ENCODE measurements at regions of chr13 and their contacts with region 1.

Region 1: DNA sequence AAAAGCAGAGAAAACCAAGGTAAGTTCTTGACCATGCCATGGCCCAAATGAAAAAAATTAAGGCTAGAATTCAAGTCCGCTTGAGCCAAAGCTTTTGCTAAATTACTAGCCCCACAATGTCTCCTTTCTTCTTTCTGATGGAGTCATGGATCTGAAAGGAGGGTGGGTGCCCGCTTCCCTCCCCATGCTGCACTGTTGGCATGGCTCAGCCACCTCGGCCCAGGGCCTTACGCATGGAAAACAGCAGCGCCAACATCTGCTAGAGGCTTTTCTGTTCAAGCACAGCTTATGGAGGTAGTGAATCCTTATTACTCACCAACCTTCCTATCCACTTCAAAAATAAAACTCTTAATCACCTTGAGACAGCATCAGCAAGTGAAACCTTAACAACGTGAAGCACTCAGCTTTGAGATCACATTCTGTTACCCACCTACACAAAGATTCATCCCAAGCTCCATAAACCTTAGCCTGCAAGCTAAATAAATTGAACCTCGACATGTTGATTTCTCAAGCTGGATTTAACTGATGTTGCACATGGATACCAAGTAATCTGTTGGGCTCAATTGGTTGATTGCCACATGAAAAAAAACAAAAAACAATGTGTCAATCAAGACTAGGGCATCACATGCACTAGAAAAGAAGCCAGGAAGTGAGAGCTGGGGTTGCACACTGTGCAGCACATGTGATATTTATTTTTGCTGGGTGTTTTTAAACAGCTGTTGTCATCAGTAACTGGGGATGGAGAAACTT is 43.4 kb downstream of the TPT1 start:
- DNase-seq: peak; percentile 75
- H3K4me3 Mint-ChIP-seq: peak overlapping the region; percentile 37
- H3K27ac Mint-ChIP-seq: peak overlapping the region; percentile 77
- H3K4me1 Mint-ChIP-seq: peaks cover 26% of the 10 kb centered on the region
- H3K27me3 Mint-ChIP-seq: peaks cover 2% of the 10 kb centered on the region

Region 2: DNA sequence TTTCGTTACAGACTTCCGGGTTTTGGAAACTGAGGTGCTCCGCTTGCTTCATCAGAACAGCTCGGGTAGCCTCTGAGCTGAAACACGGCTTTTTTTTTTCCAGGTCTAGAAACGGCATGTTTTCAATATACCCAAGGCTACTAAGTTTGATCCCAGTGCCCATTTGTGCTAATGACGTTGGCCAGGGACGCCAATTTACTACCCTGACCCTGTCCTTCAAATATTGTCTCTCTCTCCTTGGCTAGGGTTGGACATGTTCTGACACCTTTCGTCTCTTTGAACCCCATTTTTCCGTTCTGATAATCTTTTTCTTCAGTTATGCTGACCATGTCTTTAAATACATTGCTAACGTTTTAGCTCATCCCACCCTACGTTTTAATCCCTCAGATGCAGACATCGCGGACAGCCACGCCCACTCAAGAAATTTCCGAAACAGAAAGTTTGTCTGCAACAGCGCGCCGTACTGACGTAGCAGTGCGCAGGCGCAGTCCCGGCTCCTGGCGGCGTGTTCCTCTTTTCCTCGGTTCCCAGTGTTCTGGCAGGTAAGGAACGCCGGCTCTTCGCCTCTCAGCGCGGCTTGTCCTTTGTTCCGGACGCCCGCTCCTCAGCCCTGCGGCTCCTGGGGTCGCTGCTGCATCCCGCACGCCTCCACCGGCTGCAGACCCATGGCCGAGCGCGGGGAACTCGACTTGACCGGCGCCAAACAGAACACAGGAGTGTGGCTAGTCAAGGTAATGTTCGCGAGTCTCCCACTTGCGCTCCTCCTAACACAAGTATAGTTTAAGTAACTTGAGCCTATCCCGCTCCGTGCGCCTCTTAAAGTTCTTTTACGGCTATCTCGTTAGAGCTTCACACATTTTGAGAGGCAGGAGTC is 177.4 kb before region 1 on chr13 and contains the start of gene GTF2F2:
- intact Hi-C with region 1: loop called (anchors 5 kb)
- DNase-seq: peak; percentile 97
- H3K4me3 Mint-ChIP-seq: no peak within 1 kb of the TSS
- H3K27ac Mint-ChIP-seq: no peak within 1 kb of the TSS
- H3K4me1 Mint-ChIP-seq: peaks cover 7% of the 10 kb centered on the region
- H3K27me3 Mint-ChIP-seq: no peaks in the 10 kb centered on the region
- total RNA-seq, gene GTF2F2: 29.2 and 30.0 TPM in 2 replicates

Region 3: GRCh38 chr13:45310341-45311125 is 12.9 kb after region 1 on chr13:
- intact Hi-C with region 1: no loop called
- DNase-seq: no peak
- H3K4me3 Mint-ChIP-seq: peak overlapping the region; percentile 87
- H3K27ac Mint-ChIP-seq: no peak overlapping the region
- H3K4me1 Mint-ChIP-seq: peaks cover 21% of the 10 kb centered on the region
- H3K27me3 Mint-ChIP-seq: peaks cover 23% of the 10 kb centered on the region